ENCODE measurements at regions of chr16 and their contacts with region 1.

Region 1: GRCh38 chr16:79601931-79602627 is 1.5 kb upstream of the MAF start:
- DNase-seq: peak; percentile 92
- H3K4me3 Mint-ChIP-seq: peak overlapping the region; percentile 97
- H3K27ac Mint-ChIP-seq: peak overlapping the region; percentile 100
- H3K4me1 Mint-ChIP-seq: peaks cover 37% of the 10 kb centered on the region
- H3K27me3 Mint-ChIP-seq: no peaks in the 10 kb centered on the region

Region 2: GRCh38 chr16:78705694-78706093 is 896.4 kb before region 1 on chr16:
- CTCF ChIA-PET with region 1: interaction called, 9 read pairs
- POLR2A ChIA-PET with region 1: interaction called, 37 read pairs
- DNase-seq: peak; percentile 27
- H3K4me3 Mint-ChIP-seq: no peak overlapping the region
- H3K27ac Mint-ChIP-seq: peak overlapping the region; percentile 41
- H3K4me1 Mint-ChIP-seq: peaks cover 13% of the 10 kb centered on the region
- H3K27me3 Mint-ChIP-seq: no peaks in the 10 kb centered on the region

Region 3: GRCh38 chr16:78794581-78795250 is 807.4 kb before region 1 on chr16:
- CTCF ChIA-PET with region 1: no interaction called
- POLR2A ChIA-PET with region 1: interaction called, 10 read pairs
- DNase-seq: peak; percentile 46
- H3K4me3 Mint-ChIP-seq: peak overlapping the region; percentile 2
- H3K27ac Mint-ChIP-seq: peak overlapping the region; percentile 85
- H3K4me1 Mint-ChIP-seq: peaks cover 64% of the 10 kb centered on the region
- H3K27me3 Mint-ChIP-seq: no peaks in the 10 kb centered on the region

Region 4: DNA sequence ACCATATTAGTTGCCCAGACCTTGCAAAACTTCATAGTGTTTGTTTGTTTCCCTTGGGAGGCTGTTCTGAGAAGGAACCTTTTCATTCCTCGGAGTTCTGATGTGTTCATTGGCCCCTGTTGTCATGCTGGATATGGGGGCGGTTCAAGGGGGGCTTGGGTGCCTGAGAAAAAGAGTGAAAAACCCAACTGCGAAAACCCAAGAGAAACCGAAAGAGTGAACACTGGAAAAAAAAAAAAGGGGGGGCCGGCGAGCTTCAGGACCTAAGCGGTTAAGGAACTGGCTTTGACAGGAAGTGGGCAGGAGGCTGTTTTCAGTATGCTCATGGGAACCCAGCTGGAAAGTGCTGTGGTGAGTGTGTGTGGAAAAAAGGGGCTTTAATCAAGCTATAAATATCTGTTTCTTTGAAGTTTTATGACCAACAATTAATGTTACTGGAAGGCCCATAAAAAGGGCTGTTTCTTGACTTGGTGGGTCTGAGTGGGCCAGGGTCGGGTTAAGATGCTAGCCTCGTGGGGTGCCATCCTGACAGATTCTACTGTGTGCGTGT is 512.3 kb before region 1 on chr16:
- CTCF ChIA-PET with region 1: no interaction called
- POLR2A ChIA-PET with region 1: interaction called, 16 read pairs
- DNase-seq: peak; percentile 74
- H3K4me3 Mint-ChIP-seq: peak overlapping the region; percentile 60
- H3K27ac Mint-ChIP-seq: peak overlapping the region; percentile 58
- H3K4me1 Mint-ChIP-seq: peaks cover 49% of the 10 kb centered on the region
- H3K27me3 Mint-ChIP-seq: peaks cover 11% of the 10 kb centered on the region

Region 5: DNA sequence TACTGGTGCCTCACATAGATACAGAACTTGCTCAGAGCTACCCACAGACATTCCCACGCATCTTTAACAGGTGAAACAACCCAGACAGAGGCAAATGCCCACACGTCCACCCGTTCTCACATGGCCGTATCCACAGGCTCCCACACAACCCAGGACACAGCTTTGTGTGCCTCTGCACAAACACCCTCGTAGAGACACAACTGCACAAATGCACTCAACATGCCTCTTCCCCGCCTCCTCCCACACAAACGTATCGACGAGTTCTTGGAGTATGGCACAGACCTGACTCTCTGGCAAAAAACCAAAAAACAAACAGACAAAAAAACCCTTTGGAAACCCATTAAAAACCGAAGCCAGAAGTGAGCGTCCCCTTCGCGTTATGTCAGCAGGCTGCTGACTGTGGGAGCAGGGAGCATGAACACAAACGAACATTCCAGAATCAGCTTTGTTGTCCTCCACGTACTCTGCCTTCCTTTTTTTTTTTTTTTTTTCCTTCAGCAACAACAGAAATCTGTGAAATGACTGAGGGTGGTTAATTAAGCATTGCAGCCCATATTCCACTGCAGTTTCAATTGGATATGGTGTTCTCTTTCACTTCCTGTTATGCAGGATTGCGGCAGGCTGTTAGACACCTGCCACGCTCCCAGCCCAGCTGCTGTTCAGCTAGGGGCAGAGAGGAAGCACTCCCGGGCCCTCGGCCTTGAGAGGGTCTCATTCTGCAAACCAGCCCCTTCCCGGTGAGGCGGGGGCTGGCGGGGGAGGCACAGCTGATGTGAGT is 315.2 kb before region 1 on chr16:
- CTCF ChIA-PET with region 1: interaction called, 10 read pairs
- POLR2A ChIA-PET with region 1: interaction called, 67 read pairs
- DNase-seq: peak; percentile 50
- H3K4me3 Mint-ChIP-seq: peak overlapping the region; percentile 59
- H3K27ac Mint-ChIP-seq: peak overlapping the region; percentile 78
- H3K4me1 Mint-ChIP-seq: peaks cover 63% of the 10 kb centered on the region
- H3K27me3 Mint-ChIP-seq: no peaks in the 10 kb centered on the region

Region 6: DNA sequence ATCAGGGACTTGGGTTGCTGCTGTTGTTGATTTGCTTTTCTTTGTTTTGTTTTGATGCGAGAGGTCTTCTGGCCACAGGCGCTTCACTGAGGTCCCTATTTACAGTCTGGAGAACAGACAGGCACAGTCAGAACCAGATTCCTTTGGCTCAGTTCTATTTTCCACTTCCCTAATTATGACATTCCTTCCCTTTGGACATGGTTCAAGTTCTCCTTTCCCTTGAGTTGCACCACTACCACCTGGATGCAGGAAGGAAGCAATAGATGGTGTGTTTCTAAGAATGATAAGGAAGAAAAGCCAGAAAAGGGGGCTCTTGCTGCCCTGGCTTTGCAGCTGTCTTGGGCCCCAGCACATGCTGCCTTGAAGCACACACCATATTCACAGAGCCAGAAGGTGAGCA is 162.2 kb before region 1 on chr16:
- CTCF ChIA-PET with region 1: no interaction called
- POLR2A ChIA-PET with region 1: no interaction called
- DNase-seq: no peak
- H3K4me3 Mint-ChIP-seq: no peak overlapping the region
- H3K27ac Mint-ChIP-seq: no peak overlapping the region
- H3K4me1 Mint-ChIP-seq: no peaks in the 10 kb centered on the region
- H3K27me3 Mint-ChIP-seq: no peaks in the 10 kb centered on the region

Region 7: GRCh38 chr16:79613009-79613408 is 10.9 kb after region 1 on chr16:
- CTCF ChIA-PET with region 1: interaction called, 17 read pairs
- POLR2A ChIA-PET with region 1: interaction called, 97 read pairs
- DNase-seq: no peak
- H3K4me3 Mint-ChIP-seq: no peak overlapping the region
- H3K27ac Mint-ChIP-seq: no peak overlapping the region
- H3K4me1 Mint-ChIP-seq: peaks cover 60% of the 10 kb centered on the region
- H3K27me3 Mint-ChIP-seq: peaks cover 2% of the 10 kb centered on the region

Region 8: GRCh38 chr16:79640513-79641355 is 38.7 kb after region 1 on chr16:
- CTCF ChIA-PET with region 1: interaction called, 22 read pairs
- POLR2A ChIA-PET with region 1: interaction called, 202 read pairs
- DNase-seq: peak; percentile 50
- H3K4me3 Mint-ChIP-seq: peak overlapping the region; percentile 28
- H3K27ac Mint-ChIP-seq: peak overlapping the region; percentile 97
- H3K4me1 Mint-ChIP-seq: peaks cover 61% of the 10 kb centered on the region
- H3K27me3 Mint-ChIP-seq: no peaks in the 10 kb centered on the region